PC-3 (cell line): ENCODE measurements at regions of chr18 and their contacts with region 1.

Region 1: GRCh38 chr18:3012964-3013804 is at the start of gene LPIN2:
- DNase-seq: peak; percentile 99
- ATAC-seq: peak; percentile 70
- H3K4me3 ChIP-seq: peak within 1 kb of the TSS; percentile 84
- H3K27ac ChIP-seq: no peak within 1 kb of the TSS
- H3K4me1 ChIP-seq: peaks cover 39% of the 10 kb centered on the region
- H3K27me3 ChIP-seq: no peaks in the 10 kb centered on the region
- CTCF ChIP-seq: no peak
- total RNA-seq, gene LPIN2: 9.8 and 10.7 TPM in 2 replicates

Region 2: GRCh38 chr18:2985628-2986027 is 27.6 kb before region 1 on chr18:
- CTCF ChIA-PET with region 1: no interaction called
- POLR2A ChIA-PET with region 1: no interaction called
- intact Hi-C with region 1: loop called (anchors 2 kb)
- DNase-seq: peak; percentile 56
- ATAC-seq: no peak
- H3K4me3 ChIP-seq: no peak overlapping the region
- H3K27ac ChIP-seq: no peak overlapping the region
- H3K4me1 ChIP-seq: peaks cover 33% of the 10 kb centered on the region
- H3K27me3 ChIP-seq: no peaks in the 10 kb centered on the region
- CTCF ChIP-seq: peak; percentile 79

Region 3: GRCh38 chr18:3119401-3120335 is 106.5 kb after region 1 on chr18:
- CTCF ChIA-PET with region 1: interaction called, 5 read pairs
- POLR2A ChIA-PET with region 1: no interaction called
- intact Hi-C with region 1: loop called (anchors 5 kb)
- DNase-seq: peak; percentile 84
- ATAC-seq: peak; percentile 50
- H3K4me3 ChIP-seq: no peak overlapping the region
- H3K27ac ChIP-seq: peak overlapping the region; percentile 38
- H3K4me1 ChIP-seq: peaks cover 50% of the 10 kb centered on the region
- H3K27me3 ChIP-seq: no peaks in the 10 kb centered on the region
- CTCF ChIP-seq: no peak